CD8-positive, alpha-beta memory T cell (primary cell): ENCODE measurements at regions of chr17 and their contacts with region 1.

Region 1: GRCh38 chr17:8941520-8941919 is 24.0 kb downstream of the PIK3R5 start:
- DNase-seq: peak; percentile 47 to 79 (median 72)
- H3K4me3 ChIP-seq: peak overlapping the region; percentile 43
- H3K4me3 Mint-ChIP-seq: peak overlapping the region; percentile 44 to 92 (median 83)
- H3K27ac ChIP-seq: peak overlapping the region; percentile 51
- H3K27ac Mint-ChIP-seq: peak overlapping the region; percentile 90 to 100 (median 96)
- H3K4me1 ChIP-seq: peaks cover 67% of the 10 kb centered on the region
- H3K4me1 Mint-ChIP-seq: peaks cover 89 to 96% (median 96%) of the 10 kb centered on the region in 3 donors
- H3K27me3 ChIP-seq: no peaks in the 10 kb centered on the region
- H3K27me3 Mint-ChIP-seq: no peaks in the 10 kb centered on the region

Region 2: GRCh38 chr17:8900626-8901585 is 40.6 kb before region 1 on chr17:
- CTCF ChIA-PET with region 1: interaction called, 10 read pairs
- POLR2A ChIA-PET with region 1: interaction called, 4 read pairs
- DNase-seq: peak in 1 of 5 donors; percentile 46
- H3K4me3 ChIP-seq: no peak overlapping the region
- H3K4me3 Mint-ChIP-seq: peak overlapping the region in 3 of 7 donors; percentile 5 to 24 (median 19)
- H3K27ac ChIP-seq: no peak overlapping the region
- H3K27ac Mint-ChIP-seq: peak overlapping the region; percentile 93 to 99 (median 97)
- H3K4me1 ChIP-seq: peaks cover 60% of the 10 kb centered on the region
- H3K4me1 Mint-ChIP-seq: peaks cover 77 to 81% (median 80%) of the 10 kb centered on the region in 3 donors
- H3K27me3 ChIP-seq: no peaks in the 10 kb centered on the region
- H3K27me3 Mint-ChIP-seq: peaks cover 0 to 1% of the 10 kb centered on the region in 2 donors

Region 3: GRCh38 chr17:8954339-8954738 is 12.8 kb after region 1 on chr17:
- CTCF ChIA-PET with region 1: interaction called, 9 read pairs
- POLR2A ChIA-PET with region 1: interaction called, 22 read pairs
- DNase-seq: peak; percentile 74 to 90 (median 81)
- H3K4me3 ChIP-seq: peak overlapping the region; percentile 16
- H3K4me3 Mint-ChIP-seq: peak overlapping the region; percentile 61 to 91 (median 85)
- H3K27ac ChIP-seq: peak overlapping the region; percentile 39
- H3K27ac Mint-ChIP-seq: peak overlapping the region; percentile 92 to 99 (median 99)
- H3K4me1 ChIP-seq: peaks cover 95% of the 10 kb centered on the region
- H3K4me1 Mint-ChIP-seq: peaks cover 100% of the 10 kb centered on the region in 3 donors
- H3K27me3 ChIP-seq: no peaks in the 10 kb centered on the region
- H3K27me3 Mint-ChIP-seq: no peaks in the 10 kb centered on the region

Region 4: DNA sequence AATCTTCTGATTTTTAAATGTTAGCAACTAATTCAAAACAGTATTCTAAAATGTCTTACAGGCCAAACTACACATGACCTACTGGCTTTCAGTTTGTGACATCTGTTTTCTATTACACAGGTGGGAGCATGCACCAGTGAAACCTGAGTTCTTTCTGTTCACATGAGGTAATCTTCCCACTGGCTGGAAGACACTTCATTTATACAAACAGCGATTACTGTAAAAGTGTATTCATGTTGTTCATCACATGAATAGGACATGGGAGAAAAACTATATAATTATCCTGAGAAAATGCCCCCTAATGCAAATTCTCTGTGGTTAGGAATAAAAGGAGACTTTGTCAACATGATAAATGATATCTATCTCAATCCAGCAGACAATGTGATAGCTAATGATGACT is 35.1 kb after region 1 on chr17:
- CTCF ChIA-PET with region 1: no interaction called
- POLR2A ChIA-PET with region 1: no interaction called
- DNase-seq: no peak
- H3K4me3 ChIP-seq: no peak overlapping the region
- H3K4me3 Mint-ChIP-seq: no peak overlapping the region
- H3K27ac ChIP-seq: no peak overlapping the region
- H3K27ac Mint-ChIP-seq: no peak overlapping the region
- H3K4me1 ChIP-seq: no peaks in the 10 kb centered on the region
- H3K4me1 Mint-ChIP-seq: no peaks in the 10 kb centered on the region
- H3K27me3 ChIP-seq: no peaks in the 10 kb centered on the region
- H3K27me3 Mint-ChIP-seq: no peaks in the 10 kb centered on the region